Astrocyte of the cerebellum (primary cell): ENCODE measurements at regions of chr10 and their contacts with region 1.

Region 1: DNA sequence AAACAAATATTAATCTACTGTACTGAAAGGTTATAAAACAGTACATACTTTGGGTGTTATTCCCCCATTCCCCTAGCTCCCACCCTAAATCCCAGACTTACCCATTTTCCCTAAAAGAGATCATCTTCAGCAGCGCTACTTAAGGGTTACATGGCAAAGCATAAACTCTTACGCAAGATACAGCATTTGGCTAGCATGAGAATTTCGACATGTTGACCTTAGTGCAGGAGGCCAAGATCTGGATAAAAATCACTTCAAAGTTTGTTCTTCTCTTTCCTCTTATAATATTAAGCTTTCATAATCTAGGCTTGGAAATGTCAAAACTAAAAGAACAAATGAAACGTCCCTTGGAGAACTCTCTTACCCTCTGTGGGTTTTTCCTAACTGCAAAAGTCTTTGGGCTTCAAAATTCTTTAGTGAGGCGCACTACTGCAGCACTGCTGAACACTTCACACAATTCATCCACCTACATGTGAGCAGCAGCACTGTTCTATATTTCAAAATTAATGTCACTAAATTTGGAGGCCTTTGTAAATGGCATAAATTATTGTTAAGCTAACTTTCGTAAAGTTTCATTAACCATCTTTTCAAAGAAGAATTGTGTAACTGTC is 59.5 kb upstream of the PDLIM1 start:
- DNase-seq: no peak
- H3K4me3 ChIP-seq: no peak overlapping the region
- CTCF ChIP-seq: no peak

Region 2: DNA sequence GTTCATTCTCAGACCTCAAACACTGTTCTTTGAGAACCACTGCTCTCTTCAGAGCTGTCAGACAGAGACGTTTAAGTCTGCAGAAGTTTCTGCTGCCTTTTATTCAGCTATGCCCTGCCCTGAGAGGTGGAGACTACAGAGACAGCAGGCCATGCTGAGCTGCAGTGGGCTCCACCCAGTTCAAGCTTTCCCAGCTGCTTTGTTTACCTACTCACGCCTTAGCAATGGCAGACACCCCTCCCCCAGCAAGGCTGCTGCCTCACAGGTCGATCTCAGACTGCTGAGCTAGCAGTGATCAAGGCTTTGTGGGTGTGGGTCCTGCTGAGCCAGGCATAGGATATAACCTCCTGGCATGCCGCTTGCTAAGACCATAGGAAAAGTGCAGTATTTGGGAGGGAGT is 492.3 kb before region 1 on chr10:
- in situ Hi-C with region 1: no loop called
- DNase-seq: no peak
- H3K4me3 ChIP-seq: no peak overlapping the region
- CTCF ChIP-seq: no peak

Region 3: DNA sequence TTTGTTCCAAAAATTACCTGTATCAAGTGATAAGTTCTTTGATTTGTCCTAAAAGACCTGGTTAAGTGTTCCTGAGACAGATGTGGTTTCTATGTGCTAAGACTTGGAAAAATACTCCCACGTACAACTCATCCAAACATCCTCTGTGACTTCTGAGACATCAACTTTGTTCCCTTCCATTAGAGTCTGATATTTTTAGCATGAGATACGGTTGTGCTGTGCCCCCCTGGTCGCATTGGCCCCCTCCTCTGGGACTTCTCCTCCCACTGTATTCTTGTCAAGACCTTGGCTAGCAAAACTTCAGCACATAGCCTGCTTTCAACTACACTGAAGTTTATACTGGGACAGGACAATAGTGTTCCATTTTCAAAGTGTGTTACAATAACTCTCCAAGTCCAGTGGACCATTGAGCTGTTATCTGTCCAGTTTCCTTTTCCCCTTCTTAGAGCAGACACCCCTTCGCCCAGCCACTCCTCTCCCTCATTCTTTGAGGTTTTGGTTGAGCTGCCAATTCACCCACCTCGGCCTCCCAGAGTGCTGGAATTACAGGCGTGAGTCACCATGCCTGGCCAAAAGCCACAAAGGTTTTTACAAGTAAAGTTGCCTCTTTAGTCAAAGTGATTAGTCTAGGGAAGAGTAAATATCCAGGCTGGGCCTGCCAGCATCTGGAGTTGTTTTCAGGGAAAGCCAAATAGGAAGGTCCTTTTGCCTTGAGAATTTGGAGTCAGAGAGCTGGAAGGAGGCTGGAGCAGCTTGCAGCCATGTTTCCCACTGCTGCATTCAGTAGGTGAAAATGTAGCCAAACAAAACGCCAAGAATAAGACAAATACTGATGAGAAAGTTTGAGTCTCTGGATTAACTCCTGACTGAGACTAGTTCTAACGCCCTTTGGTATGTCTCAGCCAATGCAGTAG is 41.7 kb before region 1 on chr10:
- in situ Hi-C with region 1: loop called (anchors 5 kb)
- DNase-seq: peak; percentile 99
- H3K4me3 ChIP-seq: no peak overlapping the region
- CTCF ChIP-seq: no peak

Region 4: DNA sequence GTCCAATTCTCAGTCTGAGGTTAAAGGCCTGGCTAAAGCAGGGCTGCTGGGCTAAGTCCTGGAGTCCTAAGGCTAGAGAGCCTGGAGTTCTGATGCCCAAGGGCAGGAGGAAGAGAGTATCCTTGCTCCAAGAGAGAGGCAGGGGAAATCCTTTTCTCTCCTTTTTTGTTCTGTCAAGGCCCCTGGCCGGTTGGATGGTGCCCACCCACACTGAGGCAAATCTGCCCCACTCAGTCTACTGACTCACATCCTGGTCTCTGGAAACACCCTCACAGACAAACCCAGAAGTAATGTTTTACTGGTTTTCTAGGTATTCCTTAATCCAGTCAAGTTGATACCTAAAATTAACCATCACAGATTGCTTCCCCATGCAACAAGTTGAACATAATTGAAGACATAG is 802.7 kb after region 1 on chr10:
- in situ Hi-C with region 1: no loop called
- DNase-seq: no peak
- H3K4me3 ChIP-seq: no peak overlapping the region
- CTCF ChIP-seq: no peak